A673 (cell line): ENCODE measurements at regions of chr7 and their contacts with region 1.

Region 1: GRCh38 chr7:135281363-135281949 is 47.8 kb downstream of the STRA8 start:
- DNase-seq: peak; percentile 89
- H3K4me3 ChIP-seq: no peak overlapping the region
- H3K27ac ChIP-seq: no peak overlapping the region
- H3K4me1 ChIP-seq: no peaks in the 10 kb centered on the region
- H3K27me3 ChIP-seq: no peaks in the 10 kb centered on the region
- CTCF ChIP-seq: peak; percentile 100

Region 2: GRCh38 chr7:135335628-135336139 is 54.2 kb after region 1 on chr7:
- CTCF ChIA-PET with region 1: interaction called, 10 read pairs
- POLR2A ChIA-PET with region 1: no interaction called
- intact Hi-C with region 1: loop called (anchors 1 kb)
- DNase-seq: peak; percentile 72
- H3K4me3 ChIP-seq: no peak overlapping the region
- H3K27ac ChIP-seq: no peak overlapping the region
- H3K4me1 ChIP-seq: no peaks in the 10 kb centered on the region
- H3K27me3 ChIP-seq: peaks cover 6% of the 10 kb centered on the region
- CTCF ChIP-seq: peak; percentile 61

Region 3: DNA sequence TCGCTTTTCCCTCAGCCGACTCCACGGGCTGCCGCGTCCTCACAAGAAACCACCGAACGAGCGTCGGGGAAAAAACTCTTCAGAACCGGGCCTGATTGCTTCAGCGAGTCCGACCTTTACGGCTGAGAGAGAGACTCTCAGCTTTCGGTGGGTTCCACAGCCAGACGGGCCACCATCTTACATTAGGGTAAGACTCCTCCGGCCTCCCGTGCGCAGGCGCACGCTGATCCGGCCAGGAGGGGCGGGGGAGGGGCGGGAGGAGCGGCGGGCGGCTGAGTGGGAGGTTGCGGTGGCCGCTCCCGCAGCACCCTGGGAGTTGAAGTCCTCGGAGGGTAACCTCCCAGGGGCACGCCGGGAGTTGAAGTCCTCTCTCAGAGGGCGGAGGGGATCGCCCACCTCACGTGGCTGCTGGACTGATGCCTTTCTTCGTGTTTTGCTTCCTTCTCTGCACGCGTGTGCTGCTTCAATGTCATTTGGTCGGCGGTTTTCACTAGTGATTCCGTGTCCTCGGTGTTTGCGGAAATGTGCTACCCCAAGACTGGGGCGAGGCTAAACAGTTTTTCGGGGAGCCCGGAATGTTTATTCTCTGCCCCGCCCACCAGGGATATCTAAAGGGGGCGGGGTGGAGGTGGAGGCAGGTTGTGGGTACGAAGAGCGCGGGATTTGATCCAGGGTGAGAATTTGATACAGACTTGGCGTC is 228.6 kb after region 1 on chr7 and contains the start of gene CNOT4:
- CTCF ChIA-PET with region 1: no interaction called
- POLR2A ChIA-PET with region 1: no interaction called
- intact Hi-C with region 1: loop called (anchors 2 kb)
- DNase-seq: peak; percentile 99
- H3K4me3 ChIP-seq: peak within 1 kb of the TSS; percentile 82
- H3K27ac ChIP-seq: peak within 1 kb of the TSS; percentile 95
- H3K4me1 ChIP-seq: peaks cover 13% of the 10 kb centered on the region
- H3K27me3 ChIP-seq: no peaks in the 10 kb centered on the region
- CTCF ChIP-seq: no peak
- total RNA-seq, gene CNOT4: 24.1 and 24.6 TPM in 2 replicates

Region 4: DNA sequence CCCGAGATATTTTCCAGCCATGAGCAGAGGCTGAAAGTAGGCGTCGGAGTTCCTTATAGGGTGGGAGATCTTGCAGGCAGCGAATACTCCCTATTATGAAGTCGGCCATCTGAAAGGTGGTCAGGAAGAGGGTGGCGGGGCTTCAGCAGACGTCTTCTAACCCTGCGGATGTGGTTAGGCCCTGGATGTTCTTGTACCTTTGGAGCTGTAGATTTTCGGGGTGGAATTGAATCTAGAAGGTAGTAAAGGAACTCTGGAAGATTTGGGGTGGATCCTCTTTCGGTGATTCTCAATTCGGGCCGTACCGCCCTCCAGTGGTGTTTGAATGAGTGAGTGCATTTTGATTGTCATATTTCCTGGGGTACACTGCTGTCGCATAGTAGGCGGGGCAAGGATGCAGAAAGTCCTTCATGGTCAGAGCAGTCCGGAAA is 276.9 kb after region 1 on chr7:
- CTCF ChIA-PET with region 1: no interaction called
- POLR2A ChIA-PET with region 1: interaction called, 4 read pairs
- intact Hi-C with region 1: loop called (anchors 1 kb)
- DNase-seq: peak; percentile 91
- H3K4me3 ChIP-seq: peak overlapping the region; percentile 67
- H3K27ac ChIP-seq: peak overlapping the region; percentile 94
- H3K4me1 ChIP-seq: peaks cover 11% of the 10 kb centered on the region
- H3K27me3 ChIP-seq: no peaks in the 10 kb centered on the region
- CTCF ChIP-seq: peak; percentile 72

Region 5: GRCh38 chr7:135645296-135645904 is 363.9 kb after region 1 on chr7:
- CTCF ChIA-PET with region 1: interaction called, 6 read pairs
- POLR2A ChIA-PET with region 1: no interaction called
- intact Hi-C with region 1: loop called (anchors 1 kb)
- DNase-seq: peak; percentile 65
- H3K4me3 ChIP-seq: no peak overlapping the region
- H3K27ac ChIP-seq: no peak overlapping the region
- H3K4me1 ChIP-seq: no peaks in the 10 kb centered on the region
- H3K27me3 ChIP-seq: no peaks in the 10 kb centered on the region
- CTCF ChIP-seq: peak; percentile 68

Region 6: GRCh38 chr7:135925210-135925609 is 643.8 kb after region 1 on chr7:
- CTCF ChIA-PET with region 1: no interaction called
- POLR2A ChIA-PET with region 1: no interaction called
- intact Hi-C with region 1: no loop called
- DNase-seq: no peak
- H3K4me3 ChIP-seq: no peak overlapping the region
- H3K27ac ChIP-seq: no peak overlapping the region
- H3K4me1 ChIP-seq: peaks cover 11% of the 10 kb centered on the region
- H3K27me3 ChIP-seq: no peaks in the 10 kb centered on the region
- CTCF ChIP-seq: no peak